ENCODE measurements at regions of chr1 and their contacts with region 1.

Region 1: GRCh38 chr1:171715813-171716251 is 26.0 kb downstream of the VAMP4 start:
- DNase-seq: no peak
- ATAC-seq: peak; percentile 63
- H3K4me3 ChIP-seq: no peak overlapping the region
- H3K27ac ChIP-seq: no peak overlapping the region
- H3K4me1 ChIP-seq: no peaks in the 10 kb centered on the region
- H3K27me3 ChIP-seq: no peaks in the 10 kb centered on the region
- CTCF ChIP-seq: peak; percentile 21 to 43 (median 27); a peak in 2 of 6 replicates
- EP300 ChIP-seq: no peak
- POLR2A ChIP-seq: no peak
- RAD21 ChIP-seq: no peak

Region 2: DNA sequence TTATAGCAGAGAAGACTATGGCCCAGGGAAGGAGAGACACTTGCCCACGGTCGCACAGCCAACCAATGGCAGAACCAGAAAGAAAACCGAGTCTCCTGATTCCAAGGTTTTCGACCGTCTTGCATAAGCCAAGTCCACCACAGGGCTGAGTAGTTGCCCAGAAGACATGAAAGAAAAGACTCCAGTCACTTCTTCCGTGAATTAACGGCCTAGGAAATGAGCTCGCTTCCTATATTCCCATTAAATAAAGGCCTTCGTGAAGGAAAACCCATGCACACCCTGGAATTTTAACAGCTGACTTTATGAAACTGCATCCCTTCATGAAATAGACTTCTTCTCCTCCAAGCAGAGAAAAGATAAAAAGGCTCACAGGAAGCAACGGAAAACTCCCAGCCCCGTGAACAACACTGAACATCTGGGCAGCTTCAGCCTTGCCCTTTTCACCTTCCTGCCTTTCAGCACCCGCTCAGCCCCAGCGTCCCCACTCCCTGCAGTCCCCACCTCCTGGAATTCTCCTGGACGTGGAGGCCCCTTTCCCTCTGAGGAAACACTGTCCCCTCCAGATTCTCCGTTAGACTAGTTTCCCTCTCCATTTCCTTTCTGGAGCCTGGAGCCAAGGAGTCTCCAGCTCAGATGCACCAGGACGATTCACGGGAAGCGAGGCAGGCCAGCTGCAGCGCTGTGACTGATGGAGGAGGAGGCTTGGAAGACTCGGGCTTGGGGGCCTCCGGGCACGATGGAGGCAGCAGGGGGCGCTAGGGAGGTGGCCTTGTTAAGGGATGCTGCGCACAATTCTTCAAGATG is 60.7 kb before region 1 on chr1:
- CTCF ChIA-PET with region 1: interaction called, 21 read pairs
- POLR2A ChIA-PET with region 1: no interaction called
- RAD21 ChIA-PET with region 1: interaction called, 4 read pairs
- SMC1A ChIA-PET with region 1: interaction called, 4 read pairs
- in situ Hi-C with region 1: no loop called
- intact Hi-C with region 1: loop called (anchors 1 kb)
- DNase-seq: no peak
- ATAC-seq: peak; percentile 97
- H3K4me3 ChIP-seq: no peak overlapping the region
- H3K27ac ChIP-seq: no peak overlapping the region
- H3K4me1 ChIP-seq: no peaks in the 10 kb centered on the region
- H3K27me3 ChIP-seq: peaks cover 0 to 3% of the 10 kb centered on the region in 2 experiments; a peak in 1 of 4 replicates
- CTCF ChIP-seq: peak; percentile 62 to 89 (median 86)
- EP300 ChIP-seq: no peak
- POLR2A ChIP-seq: no peak
- RAD21 ChIP-seq: peak; percentile 62

Region 3: GRCh38 chr1:171741872-171742576 is 26.2 kb after region 1 on chr1 and contains the start of gene VAMP4:
- CTCF ChIA-PET with region 1: interaction called, 11 read pairs
- POLR2A ChIA-PET with region 1: interaction called, 3 read pairs
- RAD21 ChIA-PET with region 1: interaction called, 3 read pairs
- SMC1A ChIA-PET with region 1: interaction called, 6 read pairs
- in situ Hi-C with region 1: no loop called
- intact Hi-C with region 1: no loop called
- DNase-seq: peak; percentile 59
- ATAC-seq: peak; percentile 95
- H3K4me3 ChIP-seq: peak within 1 kb of the TSS; percentile 83
- H3K27ac ChIP-seq: peak within 1 kb of the TSS; percentile 92
- H3K4me1 ChIP-seq: peaks cover 4% of the 10 kb centered on the region
- H3K27me3 ChIP-seq: no peaks in the 10 kb centered on the region
- CTCF ChIP-seq: no peak
- EP300 ChIP-seq: no peak
- POLR2A ChIP-seq: peak; percentile 91
- RAD21 ChIP-seq: no peak
- polyA plus RNA-seq, gene VAMP4: 0.90 to 1.5 TPM

Region 4: GRCh38 chr1:171877701-171878100 is 161.9 kb after region 1 on chr1:
- CTCF ChIA-PET with region 1: no interaction called
- POLR2A ChIA-PET with region 1: no interaction called
- RAD21 ChIA-PET with region 1: no interaction called
- SMC1A ChIA-PET with region 1: no interaction called
- in situ Hi-C with region 1: no loop called
- intact Hi-C with region 1: no loop called
- DNase-seq: no peak
- ATAC-seq: peak; percentile 99
- H3K4me3 ChIP-seq: no peak overlapping the region
- H3K27ac ChIP-seq: no peak overlapping the region
- H3K4me1 ChIP-seq: no peaks in the 10 kb centered on the region; the same call in 1 of the 2 replicates
- H3K27me3 ChIP-seq: no peaks in the 10 kb centered on the region
- CTCF ChIP-seq: no peak
- EP300 ChIP-seq: no peak
- POLR2A ChIP-seq: no peak
- RAD21 ChIP-seq: no peak

Measured in GM12878 (cell line).